ENCODE measurements at regions of chr18 and their contacts with region 1.

Region 1: DNA sequence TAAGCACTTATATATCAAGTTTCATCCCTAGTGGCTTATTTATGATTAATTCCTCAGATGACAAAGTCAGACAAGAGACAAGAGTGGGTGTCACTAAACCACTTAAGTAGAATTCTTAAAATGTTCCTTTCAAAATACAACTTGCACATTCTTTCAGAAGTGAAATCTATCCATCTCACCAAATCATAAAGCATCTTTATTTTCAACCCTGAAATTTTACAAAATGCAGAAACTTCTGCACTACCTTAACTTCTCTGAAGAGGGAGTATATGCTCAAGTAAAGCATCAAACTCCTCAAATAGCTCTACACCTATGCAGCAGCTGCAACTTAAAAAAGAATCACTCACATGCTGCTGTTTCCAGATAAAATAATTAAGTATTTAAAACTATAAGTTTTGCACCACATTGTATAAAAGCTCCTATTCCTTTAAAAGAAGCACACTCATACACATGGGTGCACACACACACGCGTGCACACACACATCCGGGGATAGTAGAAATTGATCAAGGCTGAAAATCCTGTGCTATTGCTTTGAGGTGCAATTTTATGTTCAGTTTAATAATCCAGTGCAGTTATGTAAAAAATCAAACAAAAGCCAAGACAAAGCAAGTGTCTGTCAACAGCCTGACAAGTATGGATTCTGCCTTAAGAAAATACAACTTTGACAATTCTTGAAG is 244.5 kb downstream of the TCF4 start:
- DNase-seq: no peak
- H3K4me3 ChIP-seq: no peak overlapping the region
- H3K27ac ChIP-seq: no peak overlapping the region
- H3K27me3 ChIP-seq: no peaks in the 10 kb centered on the region
- CTCF ChIP-seq: peak; percentile 78

Region 2: DNA sequence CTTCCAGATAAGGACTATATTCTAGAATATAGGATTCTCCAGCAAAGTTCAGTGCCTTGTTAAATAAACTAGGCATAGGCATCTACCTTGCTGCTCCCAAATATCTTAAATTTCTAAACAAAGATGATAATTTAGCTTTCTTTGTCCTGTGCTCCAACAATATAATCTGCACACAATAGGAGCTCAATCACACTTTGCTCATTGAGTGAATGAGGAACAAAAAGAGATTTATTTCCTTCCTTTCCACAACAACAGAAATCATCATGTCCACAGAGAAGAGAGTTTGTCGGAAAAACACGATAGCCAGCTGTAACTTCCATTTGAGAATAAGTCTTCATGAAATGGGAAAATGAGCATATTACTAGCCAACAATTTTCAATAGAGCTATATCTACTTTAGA is 12.2 kb before region 1 on chr18:
- CTCF ChIA-PET with region 1: interaction called, 10 read pairs
- POLR2A ChIA-PET with region 1: no interaction called
- DNase-seq: no peak
- H3K4me3 ChIP-seq: no peak overlapping the region
- H3K27ac ChIP-seq: no peak overlapping the region
- H3K27me3 ChIP-seq: no peaks in the 10 kb centered on the region
- CTCF ChIP-seq: no peak

Measured in AG04450 (cell line).